IMR-90 (cell line): ENCODE measurements at regions of chr3 and their contacts with region 1.

Region 1: GRCh38 chr3:61561374-61562041 is at the start of gene PTPRG:
- DNase-seq: peak; percentile 94
- ATAC-seq: peak; percentile 59
- H3K4me3 ChIP-seq: peak within 1 kb of the TSS; percentile 99
- H3K27ac ChIP-seq: peak within 1 kb of the TSS; percentile 94
- H3K4me1 ChIP-seq: peaks cover 2% of the 10 kb centered on the region; the same call in 1 of the 2 replicates
- H3K27me3 ChIP-seq: no peaks in the 10 kb centered on the region
- CTCF ChIP-seq: no peak
- POLR2A ChIP-seq: peak; percentile 73; the same call in 1 of the 2 replicates
- RAD21 ChIP-seq: no peak
- total RNA-seq, gene PTPRG: 24.7 and 31.0 TPM in 2 replicates

Region 2: GRCh38 chr3:61464518-61465140 is 96.9 kb before region 1 on chr3:
- CTCF ChIA-PET with region 1: no interaction called
- POLR2A ChIA-PET with region 1: no interaction called
- dilution Hi-C with region 1: no loop called
- in situ Hi-C with region 1: no loop called
- intact Hi-C with region 1: no loop called
- DNase-seq: no peak
- ATAC-seq: no peak
- H3K4me3 ChIP-seq: no peak overlapping the region
- H3K27ac ChIP-seq: no peak overlapping the region
- H3K4me1 ChIP-seq: no peaks in the 10 kb centered on the region
- H3K27me3 ChIP-seq: no peaks in the 10 kb centered on the region; the same call in 1 of the 2 replicates
- CTCF ChIP-seq: no peak
- POLR2A ChIP-seq: no peak
- RAD21 ChIP-seq: no peak

Region 3: GRCh38 chr3:61627768-61628185 is 66.3 kb after region 1 on chr3:
- CTCF ChIA-PET with region 1: interaction called, 4 read pairs
- POLR2A ChIA-PET with region 1: no interaction called
- dilution Hi-C with region 1: no loop called
- in situ Hi-C with region 1: no loop called
- intact Hi-C with region 1: loop called (anchors 5 kb)
- DNase-seq: peak; percentile 93
- ATAC-seq: peak; percentile 81
- H3K4me3 ChIP-seq: no peak overlapping the region
- H3K27ac ChIP-seq: no peak overlapping the region
- H3K4me1 ChIP-seq: peaks cover 14% of the 10 kb centered on the region
- H3K27me3 ChIP-seq: no peaks in the 10 kb centered on the region
- CTCF ChIP-seq: no peak
- POLR2A ChIP-seq: no peak
- RAD21 ChIP-seq: no peak

Region 4: GRCh38 chr3:61809879-61810278 is 248.4 kb after region 1 on chr3:
- CTCF ChIA-PET with region 1: no interaction called
- POLR2A ChIA-PET with region 1: no interaction called
- dilution Hi-C with region 1: no loop called
- in situ Hi-C with region 1: no loop called
- intact Hi-C with region 1: loop called (anchors 10 kb)
- DNase-seq: no peak
- ATAC-seq: no peak
- H3K4me3 ChIP-seq: no peak overlapping the region
- H3K27ac ChIP-seq: no peak overlapping the region
- H3K4me1 ChIP-seq: peaks cover 8% of the 10 kb centered on the region
- H3K27me3 ChIP-seq: no peaks in the 10 kb centered on the region
- CTCF ChIP-seq: no peak
- POLR2A ChIP-seq: no peak
- RAD21 ChIP-seq: no peak

Region 5: GRCh38 chr3:61936344-61936937 is 374.9 kb after region 1 on chr3:
- CTCF ChIA-PET with region 1: no interaction called
- POLR2A ChIA-PET with region 1: interaction called, 5 read pairs
- dilution Hi-C with region 1: no loop called
- in situ Hi-C with region 1: no loop called
- intact Hi-C with region 1: loop called (anchors 5 kb)
- DNase-seq: peak; percentile 15
- ATAC-seq: peak; percentile 63; the same call in 1 of the 2 replicates
- H3K4me3 ChIP-seq: no peak overlapping the region
- H3K27ac ChIP-seq: no peak overlapping the region
- H3K4me1 ChIP-seq: no peaks in the 10 kb centered on the region
- H3K27me3 ChIP-seq: no peaks in the 10 kb centered on the region
- CTCF ChIP-seq: peak; percentile 46
- POLR2A ChIP-seq: no peak
- RAD21 ChIP-seq: peak; percentile 41

Region 6: GRCh38 chr3:62109534-62109933 is 548.0 kb after region 1 on chr3:
- CTCF ChIA-PET with region 1: interaction called, 7 read pairs
- POLR2A ChIA-PET with region 1: no interaction called
- dilution Hi-C with region 1: no loop called
- in situ Hi-C with region 1: no loop called
- intact Hi-C with region 1: loop called (anchors 2 kb)
- DNase-seq: peak; percentile 96
- ATAC-seq: peak; percentile 98
- H3K4me3 ChIP-seq: no peak overlapping the region
- H3K27ac ChIP-seq: no peak overlapping the region
- H3K4me1 ChIP-seq: no peaks in the 10 kb centered on the region
- H3K27me3 ChIP-seq: no peaks in the 10 kb centered on the region
- CTCF ChIP-seq: peak; percentile 32
- POLR2A ChIP-seq: no peak
- RAD21 ChIP-seq: no peak